A673 (cell line): ENCODE measurements at regions of chr21 and their contacts with region 1.

Region 1: GRCh38 chr21:32597205-32597604 is 11.9 kb upstream of the TCP10L start:
- DNase-seq: peak; percentile 8
- H3K4me3 ChIP-seq: no peak overlapping the region
- H3K27ac ChIP-seq: no peak overlapping the region
- H3K4me1 ChIP-seq: no peaks in the 10 kb centered on the region
- H3K27me3 ChIP-seq: no peaks in the 10 kb centered on the region
- CTCF ChIP-seq: no peak

Region 2: GRCh38 chr21:32371913-32372314 is 225.3 kb before region 1 on chr21:
- CTCF ChIA-PET with region 1: interaction called, 13 read pairs
- POLR2A ChIA-PET with region 1: no interaction called
- intact Hi-C with region 1: no loop called
- DNase-seq: no peak
- H3K4me3 ChIP-seq: no peak overlapping the region
- H3K27ac ChIP-seq: no peak overlapping the region
- H3K4me1 ChIP-seq: no peaks in the 10 kb centered on the region
- H3K27me3 ChIP-seq: no peaks in the 10 kb centered on the region
- CTCF ChIP-seq: no peak

Region 3: GRCh38 chr21:32412162-32413014 is 184.8 kb before region 1 on chr21 and contains the start of gene EVA1C:
- CTCF ChIA-PET with region 1: interaction called, 30 read pairs
- POLR2A ChIA-PET with region 1: no interaction called
- intact Hi-C with region 1: no loop called
- DNase-seq: peak; percentile 63
- H3K4me3 ChIP-seq: peak within 1 kb of the TSS; percentile 67
- H3K27ac ChIP-seq: peak within 1 kb of the TSS; percentile 79
- H3K4me1 ChIP-seq: peaks cover 17% of the 10 kb centered on the region
- H3K27me3 ChIP-seq: no peaks in the 10 kb centered on the region
- CTCF ChIP-seq: no peak
- total RNA-seq, gene EVA1C: 4.3 and 7.2 TPM in 2 replicates

Region 4: DNA sequence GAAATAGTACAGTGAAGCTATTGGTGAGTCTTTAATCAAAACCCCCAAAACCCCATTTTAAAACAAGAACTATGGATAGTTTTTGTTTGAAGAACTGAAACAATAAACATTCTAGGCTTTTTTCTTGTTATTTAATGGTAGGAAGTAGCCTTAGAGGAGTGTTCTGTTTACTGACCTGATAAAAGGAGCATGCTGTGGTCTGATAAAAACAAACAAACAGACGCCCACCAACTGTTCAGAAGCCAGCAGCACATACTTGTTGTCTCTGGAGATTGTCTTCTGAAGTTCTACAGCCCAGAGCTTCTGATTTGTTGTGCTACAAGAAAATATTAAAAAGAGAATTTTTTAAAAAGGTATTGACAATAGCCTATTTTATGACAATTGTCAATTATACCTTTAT is 69.1 kb after region 1 on chr21:
- CTCF ChIA-PET with region 1: interaction called, 11 read pairs
- POLR2A ChIA-PET with region 1: no interaction called
- intact Hi-C with region 1: no loop called
- DNase-seq: no peak
- H3K4me3 ChIP-seq: no peak overlapping the region
- H3K27ac ChIP-seq: no peak overlapping the region
- H3K4me1 ChIP-seq: no peaks in the 10 kb centered on the region
- H3K27me3 ChIP-seq: no peaks in the 10 kb centered on the region
- CTCF ChIP-seq: no peak

Region 5: GRCh38 chr21:32727687-32728455 is 130.7 kb after region 1 on chr21 and contains the start of gene SYNJ1:
- CTCF ChIA-PET with region 1: interaction called, 20 read pairs
- POLR2A ChIA-PET with region 1: interaction called, 4 read pairs
- intact Hi-C with region 1: no loop called
- DNase-seq: peak; percentile 95
- H3K4me3 ChIP-seq: peak within 1 kb of the TSS; percentile 83
- H3K27ac ChIP-seq: peak within 1 kb of the TSS; percentile 87
- H3K4me1 ChIP-seq: peaks cover 10% of the 10 kb centered on the region
- H3K27me3 ChIP-seq: no peaks in the 10 kb centered on the region
- CTCF ChIP-seq: no peak
- total RNA-seq, gene SYNJ1: 16.9 and 17.1 TPM in 2 replicates

Region 6: GRCh38 chr21:33199516-33200217 is 602.5 kb after region 1 on chr21:
- CTCF ChIA-PET with region 1: no interaction called
- POLR2A ChIA-PET with region 1: no interaction called
- intact Hi-C with region 1: no loop called
- DNase-seq: peak; percentile 92
- H3K4me3 ChIP-seq: no peak overlapping the region
- H3K27ac ChIP-seq: no peak overlapping the region
- H3K4me1 ChIP-seq: no peaks in the 10 kb centered on the region
- H3K27me3 ChIP-seq: no peaks in the 10 kb centered on the region
- CTCF ChIP-seq: peak; percentile 81